Sigmoid colon (tissue), 7 donors: ENCODE measurements at regions of chr5 and their contacts with region 1.

Region 1: DNA sequence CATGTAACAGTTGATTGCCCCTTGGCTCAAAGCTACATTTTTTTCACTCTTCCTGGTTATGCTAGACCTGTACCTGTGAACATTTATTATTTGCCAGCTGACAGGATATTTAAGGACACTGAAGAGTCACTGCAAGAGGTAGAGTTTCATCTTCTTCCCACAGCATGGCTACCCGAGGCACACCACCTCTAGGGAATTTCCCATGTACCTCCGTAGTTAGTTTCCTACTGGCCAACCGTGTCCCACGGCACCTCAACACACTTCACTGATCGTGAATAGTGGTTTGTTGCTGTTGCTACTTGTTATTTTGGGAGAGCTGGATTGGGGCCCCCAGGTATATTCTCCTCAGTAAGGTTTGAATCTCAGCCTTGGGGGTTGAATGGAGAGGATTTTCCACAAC is 648.6 kb downstream of the SEMA5A start:
- DNase-seq: no peak
- H3K4me3 ChIP-seq: no peak overlapping the region
- H3K27ac ChIP-seq: no peak overlapping the region
- H3K4me1 ChIP-seq: no peaks in the 10 kb centered on the region
- H3K27me3 ChIP-seq: no peaks in the 10 kb centered on the region
- CTCF ChIP-seq: no peak
- EP300 ChIP-seq: no peak
- POLR2A ChIP-seq: no peak

Region 2: GRCh38 chr5:8491254-8491653 is 406.1 kb before region 1 on chr5:
- intact Hi-C with region 1: loop called (anchors 5 kb)
- DNase-seq: no peak
- H3K4me3 ChIP-seq: no peak overlapping the region
- H3K27ac ChIP-seq: no peak overlapping the region
- H3K4me1 ChIP-seq: no peaks in the 10 kb centered on the region
- H3K27me3 ChIP-seq: no peaks in the 10 kb centered on the region
- CTCF ChIP-seq: no peak
- EP300 ChIP-seq: no peak
- POLR2A ChIP-seq: no peak